ENCODE measurements at regions of chr3 and their contacts with region 1.

Region 1: DNA sequence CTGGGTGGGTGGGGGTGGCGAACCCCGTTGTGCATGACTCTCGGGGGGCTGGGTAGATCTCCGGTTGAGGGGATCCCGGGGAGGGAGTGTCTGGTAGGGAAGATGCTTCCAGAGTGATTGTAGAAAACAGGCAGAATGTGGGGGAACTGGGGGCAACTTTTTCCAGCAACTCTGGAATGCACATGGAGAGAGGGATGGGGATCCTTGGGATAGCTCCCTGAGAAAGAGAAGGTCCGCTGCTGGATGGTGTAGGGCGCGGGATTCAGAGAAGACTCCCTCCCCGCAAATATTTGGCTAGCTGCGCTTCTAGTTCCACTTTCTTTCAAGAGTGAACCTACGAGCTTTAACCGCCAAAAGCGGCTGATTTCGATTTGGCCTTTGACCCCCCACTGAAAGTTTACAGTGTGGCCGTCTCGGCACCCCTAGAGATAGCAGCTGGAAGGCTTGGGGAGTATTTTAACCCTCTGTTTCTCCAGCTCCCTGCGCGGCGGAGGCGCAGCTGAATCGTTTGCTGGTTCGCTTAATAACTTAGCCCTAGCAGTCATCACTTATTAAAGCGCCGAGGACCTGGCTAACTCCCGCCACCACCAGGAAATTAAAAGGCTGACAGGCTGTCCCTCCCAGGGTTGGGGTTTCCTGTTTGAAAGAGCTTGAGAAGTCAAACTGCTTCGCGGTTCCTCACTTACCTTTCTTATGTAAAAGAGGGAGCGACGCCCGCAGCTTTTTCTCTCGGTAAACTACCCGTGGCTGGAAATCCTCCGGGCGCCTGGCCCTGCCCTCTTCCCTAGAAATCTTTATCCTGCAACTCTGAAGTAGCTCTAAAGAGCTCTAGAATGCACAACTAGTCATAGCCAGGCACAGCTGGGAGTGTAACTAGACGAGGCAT is 1.2 kb downstream of the PHLDB2 start:
- DNase-seq: peak; percentile 89 to 97
- H3K4me3 ChIP-seq: peak overlapping the region; percentile 65
- H3K27ac ChIP-seq: peak overlapping the region; percentile 88
- H3K4me1 ChIP-seq: peaks cover 54% of the 10 kb centered on the region
- H3K27me3 ChIP-seq: no peaks in the 10 kb centered on the region
- CTCF ChIP-seq: peak; percentile 68

Region 2: GRCh38 chr3:111717601-111718000 is 142.6 kb before region 1 on chr3:
- CTCF ChIA-PET with region 1: interaction called, 32 read pairs
- POLR2A ChIA-PET with region 1: no interaction called
- intact Hi-C with region 1: loop called (anchors 1 kb)
- DNase-seq: peak; percentile 84 to 98
- H3K4me3 ChIP-seq: no peak overlapping the region
- H3K27ac ChIP-seq: peak overlapping the region; percentile 34
- H3K4me1 ChIP-seq: peaks cover 25% of the 10 kb centered on the region
- H3K27me3 ChIP-seq: no peaks in the 10 kb centered on the region
- CTCF ChIP-seq: peak; percentile 100

Region 3: GRCh38 chr3:111803123-111803593 is 57.1 kb before region 1 on chr3:
- CTCF ChIA-PET with region 1: interaction called, 8 read pairs
- POLR2A ChIA-PET with region 1: interaction called, 16 read pairs
- intact Hi-C with region 1: loop called (anchors 1 kb)
- DNase-seq: peak; percentile 89 to 98
- H3K4me3 ChIP-seq: no peak overlapping the region
- H3K27ac ChIP-seq: peak overlapping the region; percentile 95
- H3K4me1 ChIP-seq: peaks cover 43% of the 10 kb centered on the region
- H3K27me3 ChIP-seq: no peaks in the 10 kb centered on the region
- CTCF ChIP-seq: no peak

Region 4: DNA sequence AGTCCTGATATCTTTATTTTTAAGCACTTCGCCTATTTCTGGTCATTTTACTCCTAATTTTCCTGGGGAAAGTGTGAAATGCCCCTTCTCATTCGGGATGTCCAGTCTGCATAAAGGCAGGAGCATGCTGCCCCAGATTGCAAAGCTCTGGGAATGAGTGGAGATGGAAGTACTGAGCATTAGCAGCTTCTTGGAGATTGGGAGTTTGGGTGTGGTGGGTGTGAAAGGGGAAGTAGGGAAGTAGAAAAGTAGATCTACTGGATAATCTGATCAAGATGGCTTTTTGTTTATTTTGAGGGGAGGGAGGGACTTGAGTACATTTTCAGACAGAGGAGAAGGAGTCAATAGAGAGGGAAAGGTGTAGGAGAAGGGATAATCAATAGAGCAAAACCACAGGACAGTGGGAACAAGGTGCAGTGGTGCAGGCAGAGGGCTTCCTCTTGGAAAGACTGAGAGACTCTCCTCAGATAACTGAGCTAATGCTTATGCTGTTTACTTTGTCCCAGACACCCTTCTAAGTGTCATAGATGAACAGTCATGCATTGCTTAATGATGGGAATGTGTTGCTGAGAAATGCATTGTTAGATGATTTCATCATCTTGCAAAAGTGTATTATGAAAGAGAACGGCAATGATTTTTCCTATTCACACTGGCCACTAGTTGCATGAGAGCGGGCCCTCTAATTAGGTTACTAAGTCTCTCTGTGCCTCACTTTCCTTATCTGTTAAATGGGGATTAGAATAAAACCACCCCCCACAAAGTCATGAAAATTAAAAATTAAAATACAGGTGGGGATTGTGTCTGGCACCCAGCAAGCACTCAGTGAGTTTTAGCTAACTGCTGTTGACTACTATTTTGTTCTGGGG is 44.4 kb after region 1 on chr3:
- CTCF ChIA-PET with region 1: interaction called, 3 read pairs
- POLR2A ChIA-PET with region 1: interaction called, 4 read pairs
- intact Hi-C with region 1: loop called (anchors 1 kb)
- DNase-seq: peak; percentile 47 to 99
- H3K4me3 ChIP-seq: no peak overlapping the region; the same call in 1 of the 2 replicates
- H3K27ac ChIP-seq: peak overlapping the region; percentile 96
- H3K4me1 ChIP-seq: peaks cover 55% of the 10 kb centered on the region
- H3K27me3 ChIP-seq: no peaks in the 10 kb centered on the region
- CTCF ChIP-seq: peak; percentile 30

Region 5: DNA sequence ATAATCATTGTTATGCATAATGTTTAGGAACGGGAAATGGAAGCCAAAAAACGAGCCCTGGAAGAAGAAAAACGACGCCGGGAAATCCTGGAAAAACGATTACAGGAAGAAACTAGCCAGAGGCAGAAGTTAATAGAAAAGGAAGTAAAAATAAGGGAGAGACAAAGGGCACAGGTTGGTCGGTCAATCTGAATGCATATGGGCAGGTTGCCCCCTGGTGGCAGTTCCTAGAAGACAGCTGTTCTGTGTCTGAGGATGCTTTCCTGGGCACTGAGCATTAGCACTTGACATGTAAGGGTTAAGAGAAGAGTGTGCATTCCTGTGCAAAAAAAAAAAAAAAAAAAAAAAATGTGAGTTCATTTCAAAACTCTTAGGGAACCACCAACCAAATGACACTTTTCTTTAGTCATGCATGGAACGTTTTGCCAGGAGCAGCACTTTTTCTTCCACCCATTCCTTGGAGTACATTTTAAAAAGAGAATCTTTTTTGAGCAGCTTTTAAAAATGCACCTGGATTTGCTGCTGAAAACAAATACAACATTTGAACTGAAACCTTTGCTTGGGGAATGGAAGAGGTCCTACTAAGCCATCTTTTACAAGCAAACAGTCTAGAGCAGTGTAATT is 107.5 kb after region 1 on chr3:
- CTCF ChIA-PET with region 1: interaction called, 4 read pairs
- POLR2A ChIA-PET with region 1: interaction called, 3 read pairs
- intact Hi-C with region 1: loop called (anchors 1 kb)
- DNase-seq: peak; percentile 71 to 85
- H3K4me3 ChIP-seq: no peak overlapping the region
- H3K27ac ChIP-seq: peak overlapping the region; percentile 54
- H3K4me1 ChIP-seq: peaks cover 25% of the 10 kb centered on the region
- H3K27me3 ChIP-seq: no peaks in the 10 kb centered on the region
- CTCF ChIP-seq: peak; percentile 99

Region 6: GRCh38 chr3:112635671-112636070 is 775.5 kb after region 1 on chr3:
- CTCF ChIA-PET with region 1: no interaction called
- POLR2A ChIA-PET with region 1: no interaction called
- intact Hi-C with region 1: no loop called
- DNase-seq: no peak
- H3K4me3 ChIP-seq: no peak overlapping the region
- H3K27ac ChIP-seq: no peak overlapping the region
- H3K4me1 ChIP-seq: peaks cover 20% of the 10 kb centered on the region
- H3K27me3 ChIP-seq: no peaks in the 10 kb centered on the region
- CTCF ChIP-seq: no peak

Measured in PC-9 (cell line).